ENCODE measurements at regions of chr9 and their contacts with region 1.

Region 1: GRCh38 chr9:132560616-132561202 is 21.7 kb upstream of the BARHL1 start:
- DNase-seq: no peak
- H3K4me3 ChIP-seq: no peak overlapping the region
- H3K27ac ChIP-seq: no peak overlapping the region
- H3K4me1 ChIP-seq: no peaks in the 10 kb centered on the region
- H3K27me3 ChIP-seq: peaks cover 100% of the 10 kb centered on the region
- CTCF ChIP-seq: no peak

Region 2: DNA sequence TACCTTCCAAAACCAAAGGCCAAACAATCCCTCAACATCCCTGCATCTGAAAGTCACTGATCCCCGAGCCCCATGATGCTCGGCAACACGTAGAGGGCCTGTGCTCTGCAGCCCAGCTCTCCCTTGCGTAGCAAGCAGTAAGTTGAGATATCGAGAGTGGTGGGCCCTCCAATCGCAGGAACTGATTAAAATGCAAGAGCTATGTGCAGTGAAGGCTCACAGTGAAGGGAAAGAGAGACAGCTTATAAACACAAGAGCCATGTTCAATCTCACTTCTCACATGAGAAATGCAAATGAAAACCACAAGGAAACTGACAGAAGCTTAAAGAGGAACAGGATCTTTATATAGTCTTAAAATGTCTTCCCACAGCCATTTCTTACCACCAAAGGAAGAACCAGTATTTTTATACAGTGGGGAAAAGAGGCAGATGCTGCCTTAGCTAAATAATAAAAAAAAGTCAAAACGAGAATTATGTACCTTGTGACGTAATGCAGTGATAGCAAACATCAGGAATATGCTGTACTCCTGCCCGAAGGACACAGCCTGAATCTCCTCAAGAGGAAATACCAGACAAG is 178.7 kb before region 1 on chr9:
- CTCF ChIA-PET with region 1: no interaction called
- POLR2A ChIA-PET with region 1: no interaction called
- intact Hi-C with region 1: no loop called
- DNase-seq: no peak
- H3K4me3 ChIP-seq: no peak overlapping the region
- H3K27ac ChIP-seq: no peak overlapping the region
- H3K4me1 ChIP-seq: no peaks in the 10 kb centered on the region
- H3K27me3 ChIP-seq: no peaks in the 10 kb centered on the region
- CTCF ChIP-seq: no peak

Region 3: GRCh38 chr9:132498531-132499210 is 62.0 kb before region 1 on chr9:
- CTCF ChIA-PET with region 1: interaction called, 18 read pairs
- POLR2A ChIA-PET with region 1: no interaction called
- intact Hi-C with region 1: loop called (anchors 1 kb)
- DNase-seq: no peak
- H3K4me3 ChIP-seq: no peak overlapping the region
- H3K27ac ChIP-seq: no peak overlapping the region
- H3K4me1 ChIP-seq: no peaks in the 10 kb centered on the region
- H3K27me3 ChIP-seq: peaks cover 98% of the 10 kb centered on the region
- CTCF ChIP-seq: no peak

Region 4: DNA sequence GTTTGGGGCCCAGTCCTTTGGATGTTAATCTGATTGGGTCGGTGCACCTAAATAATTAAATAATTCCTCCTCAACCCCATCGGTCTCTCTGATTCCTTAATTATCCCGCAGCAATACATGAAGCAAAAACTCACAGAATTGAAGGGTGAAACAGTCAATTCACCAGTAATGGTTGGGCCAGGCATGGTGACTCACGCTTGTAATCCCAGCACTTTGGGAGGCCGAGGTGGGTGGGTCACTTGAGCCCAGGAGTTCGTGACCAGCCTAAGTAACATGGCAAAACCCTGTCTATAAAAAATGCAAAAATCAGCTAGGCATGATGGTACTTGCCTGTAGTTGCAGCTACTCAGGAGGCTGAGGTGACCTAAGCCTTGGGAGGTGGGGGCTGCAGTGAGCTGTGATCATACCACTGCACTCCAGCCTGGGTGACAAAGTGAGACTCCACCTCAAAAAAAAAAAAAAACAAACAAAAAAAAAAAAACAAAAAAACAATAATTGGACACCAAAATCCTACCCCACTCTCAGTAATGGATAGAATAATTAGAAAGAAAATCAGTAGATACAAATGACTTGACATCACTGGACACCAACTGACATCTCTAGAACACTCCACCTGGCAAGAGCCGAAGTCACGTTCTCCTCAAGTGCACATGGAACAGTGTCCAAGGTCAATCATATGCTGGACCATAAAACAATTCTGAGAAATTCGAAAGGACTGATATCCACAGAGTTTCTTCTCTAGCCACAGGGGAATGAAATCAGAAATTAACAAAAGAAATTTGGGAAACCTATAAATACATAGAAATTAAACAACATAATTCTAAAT is 709.0 kb after region 1 on chr9:
- CTCF ChIA-PET with region 1: no interaction called
- POLR2A ChIA-PET with region 1: interaction called, 13 read pairs
- intact Hi-C with region 1: no loop called
- DNase-seq: no peak
- H3K4me3 ChIP-seq: no peak overlapping the region
- H3K27ac ChIP-seq: no peak overlapping the region
- H3K4me1 ChIP-seq: no peaks in the 10 kb centered on the region
- H3K27me3 ChIP-seq: peaks cover 13% of the 10 kb centered on the region
- CTCF ChIP-seq: no peak